IMR-90 (cell line): ENCODE measurements at regions of chr12 and their contacts with region 1.

Region 1: GRCh38 chr12:50924439-50925341 is 27.7 kb upstream of the HIGD1C start:
- DNase-seq: peak; percentile 86
- ATAC-seq: peak; percentile 88
- H3K4me3 ChIP-seq: peak overlapping the region; percentile 37
- H3K27ac ChIP-seq: peak overlapping the region; percentile 86; the same call in 1 of the 2 replicates
- H3K4me1 ChIP-seq: peaks cover 13% of the 10 kb centered on the region
- H3K27me3 ChIP-seq: no peaks in the 10 kb centered on the region
- CTCF ChIP-seq: no peak
- POLR2A ChIP-seq: no peak
- RAD21 ChIP-seq: no peak

Region 2: DNA sequence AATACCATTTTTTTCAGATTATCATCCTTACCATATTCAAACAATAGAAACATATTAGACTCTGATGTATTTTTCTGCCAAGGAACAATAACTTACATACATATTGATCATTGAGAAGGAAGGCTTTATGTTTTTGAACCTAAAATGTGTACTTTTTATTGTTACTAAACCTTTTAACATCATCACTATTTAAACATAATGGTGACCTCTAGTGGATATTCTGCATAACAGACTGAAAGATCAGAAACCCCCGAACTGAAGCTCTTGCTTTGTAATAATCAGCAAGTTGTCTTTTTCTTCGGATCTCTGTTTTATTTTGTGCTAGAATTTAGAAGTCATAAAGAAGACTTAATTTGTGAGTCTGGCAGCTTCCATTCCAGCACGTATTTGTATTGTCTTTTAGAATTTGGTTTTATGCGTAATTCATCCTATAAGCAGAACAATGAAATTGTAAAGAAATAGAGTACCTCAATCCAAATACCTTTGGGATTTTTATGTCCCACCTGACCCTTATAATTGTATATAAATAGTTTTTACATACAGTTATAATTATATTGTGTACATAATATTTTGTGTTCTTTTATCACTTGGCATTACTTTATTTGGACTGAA is 286.7 kb before region 1 on chr12:
- CTCF ChIA-PET with region 1: no interaction called
- POLR2A ChIA-PET with region 1: no interaction called
- dilution Hi-C with region 1: no loop called
- in situ Hi-C with region 1: no loop called
- intact Hi-C with region 1: no loop called
- DNase-seq: peak; percentile 69
- ATAC-seq: peak; percentile 45; the same call in 1 of the 2 replicates
- H3K4me3 ChIP-seq: no peak overlapping the region
- H3K27ac ChIP-seq: no peak overlapping the region
- H3K4me1 ChIP-seq: peaks cover 7% of the 10 kb centered on the region
- H3K27me3 ChIP-seq: no peaks in the 10 kb centered on the region
- CTCF ChIP-seq: peak; percentile 71
- POLR2A ChIP-seq: no peak
- RAD21 ChIP-seq: peak; percentile 76

Region 3: DNA sequence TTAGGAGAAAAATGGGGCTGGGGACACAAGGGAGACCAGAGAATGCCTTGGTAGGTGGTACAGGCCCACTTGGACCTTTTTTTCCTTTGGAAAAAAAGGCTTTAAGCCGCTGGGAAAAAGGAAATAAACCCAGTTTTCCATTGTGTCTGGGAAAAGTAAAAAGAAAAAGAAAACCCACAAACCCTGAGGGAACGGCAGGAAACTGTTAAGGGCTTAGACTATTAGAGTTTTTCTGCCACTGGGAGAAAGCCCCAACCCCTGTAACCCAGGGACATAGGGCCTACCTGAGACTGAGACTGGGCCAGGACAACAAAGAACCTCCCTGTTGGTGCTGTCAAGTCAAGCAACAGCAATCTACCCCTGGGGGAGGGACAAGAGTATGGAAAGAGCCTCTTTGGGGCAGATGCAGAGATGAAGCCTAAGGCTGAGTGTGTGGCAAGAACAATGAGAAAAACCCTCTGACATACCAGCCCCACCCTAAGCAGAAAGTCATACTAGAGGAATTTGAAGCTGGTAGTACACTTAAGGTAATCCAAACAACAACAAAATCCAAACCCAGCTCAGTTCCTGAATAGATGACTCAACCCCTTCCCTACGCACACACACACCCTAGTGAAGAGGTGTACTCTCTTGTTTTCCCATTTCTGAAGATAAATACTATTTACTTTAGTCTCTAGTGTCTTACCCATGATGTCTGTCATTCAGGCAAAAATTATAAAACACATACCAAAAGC is 138.0 kb before region 1 on chr12:
- CTCF ChIA-PET with region 1: no interaction called
- POLR2A ChIA-PET with region 1: interaction called, 12 read pairs
- dilution Hi-C with region 1: no loop called
- in situ Hi-C with region 1: no loop called
- intact Hi-C with region 1: no loop called
- DNase-seq: peak; percentile 97
- ATAC-seq: peak; percentile 80
- H3K4me3 ChIP-seq: no peak overlapping the region
- H3K27ac ChIP-seq: peak overlapping the region; percentile 93
- H3K4me1 ChIP-seq: peaks cover 20% of the 10 kb centered on the region
- H3K27me3 ChIP-seq: no peaks in the 10 kb centered on the region
- CTCF ChIP-seq: no peak
- POLR2A ChIP-seq: peak; percentile 47; the same call in 1 of the 2 replicates
- RAD21 ChIP-seq: no peak

Region 4: GRCh38 chr12:52452101-52452500 is 1527.4 kb after region 1 on chr12 and contains the start of gene KRT6B:
- CTCF ChIA-PET with region 1: no interaction called
- POLR2A ChIA-PET with region 1: no interaction called
- dilution Hi-C with region 1: no loop called
- in situ Hi-C with region 1: no loop called
- intact Hi-C with region 1: no loop called
- DNase-seq: no peak
- ATAC-seq: no peak
- H3K4me3 ChIP-seq: no peak within 1 kb of the TSS
- H3K27ac ChIP-seq: no peak within 1 kb of the TSS
- H3K4me1 ChIP-seq: no peaks in the 10 kb centered on the region
- H3K27me3 ChIP-seq: peaks cover 9% of the 10 kb centered on the region; the same call in 1 of the 2 replicates
- CTCF ChIP-seq: no peak
- POLR2A ChIP-seq: no peak
- RAD21 ChIP-seq: no peak
- total RNA-seq, gene KRT6B: not detected in 2 replicates